HCT116 (cell line): ENCODE measurements at regions of chr1 and their contacts with region 1.

Region 1: GRCh38 chr1:174999216-174999925 is 376 bp upstream of the CACYBP start:
- DNase-seq: peak; percentile 97
- ATAC-seq: peak; percentile 83
- H3K4me3 ChIP-seq: peak overlapping the region; percentile 87 to 96
- H3K27ac ChIP-seq: peak overlapping the region; percentile 77
- H3K4me1 ChIP-seq: peaks cover 8 to 32% of the 10 kb centered on the region in 2 experiments
- H3K27me3 ChIP-seq: no peaks in the 10 kb centered on the region
- CTCF ChIP-seq: no peak
- POLR2A ChIP-seq: peak; percentile 92
- RAD21 ChIP-seq: no peak

Region 2: GRCh38 chr1:175023043-175023921 is 23.9 kb after region 1 on chr1 and contains the start of gene MRPS14:
- CTCF ChIA-PET with region 1: no interaction called
- POLR2A ChIA-PET with region 1: interaction called, 21 read pairs
- RAD21 ChIA-PET with region 1: no interaction called
- intact Hi-C with region 1: no loop called
- DNase-seq: peak; percentile 98
- ATAC-seq: peak; percentile 96
- H3K4me3 ChIP-seq: peak within 1 kb of the TSS; percentile 90 to 97
- H3K27ac ChIP-seq: peak within 1 kb of the TSS; percentile 67
- H3K4me1 ChIP-seq: peaks cover 0 to 13% of the 10 kb centered on the region in 2 experiments; a peak in 2 of 4 replicates
- H3K27me3 ChIP-seq: no peaks in the 10 kb centered on the region
- CTCF ChIP-seq: no peak
- POLR2A ChIP-seq: peak; percentile 86
- RAD21 ChIP-seq: no peak
- total RNA-seq, gene MRPS14: 29.4 TPM